OCI-LY7 (cell line): ENCODE measurements at regions of chr6 and their contacts with region 1.

Region 1: GRCh38 chr6:10694302-10695085 is at the starts of genes C6orf52 and PAK1IP1:
- DNase-seq: peak; percentile 97
- H3K4me3 ChIP-seq: peak within 1 kb of the TSS; percentile 92
- H3K27ac ChIP-seq: peak within 1 kb of the TSS; percentile 84
- H3K4me1 ChIP-seq: peaks cover 15% of the 10 kb centered on the region
- CTCF ChIP-seq: no peak
- total RNA-seq, gene C6orf52: 0.66 TPM in 1 of 2 replicates, not detected in the other
- total RNA-seq, gene PAK1IP1: 27.8 and 29.7 TPM in 2 replicates

Region 2: GRCh38 chr6:10510592-10511367 is 183.7 kb before region 1 on chr6:
- CTCF ChIA-PET with region 1: no interaction called
- POLR2A ChIA-PET with region 1: interaction called, 8 read pairs
- intact Hi-C with region 1: loop called (anchors 1 kb)
- DNase-seq: peak; percentile 82
- H3K4me3 ChIP-seq: peak overlapping the region; percentile 11
- H3K27ac ChIP-seq: no peak overlapping the region
- H3K4me1 ChIP-seq: peaks cover 17% of the 10 kb centered on the region
- CTCF ChIP-seq: peak; percentile 96

Region 3: DNA sequence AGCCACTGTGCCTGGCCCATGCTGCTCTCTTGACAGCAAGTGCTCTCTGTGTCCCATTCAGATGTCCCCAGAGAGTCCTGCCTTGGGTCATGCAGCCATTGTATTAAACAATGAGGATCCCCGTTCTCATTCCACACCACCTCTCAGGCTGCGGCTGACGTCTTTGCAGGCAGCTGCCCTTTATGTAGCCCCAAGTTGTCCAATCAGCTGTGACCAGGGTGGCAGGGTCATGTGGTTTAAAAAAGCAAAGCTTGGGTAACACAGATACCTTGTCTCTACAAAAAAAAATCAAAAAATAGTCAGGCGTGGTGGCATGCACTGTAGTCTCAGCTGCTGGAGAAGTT is 160.1 kb before region 1 on chr6:
- CTCF ChIA-PET with region 1: no interaction called
- POLR2A ChIA-PET with region 1: interaction called, 11 read pairs
- intact Hi-C with region 1: loop called (anchors 1 kb)
- DNase-seq: peak; percentile 87
- H3K4me3 ChIP-seq: peak overlapping the region; percentile 89
- H3K27ac ChIP-seq: peak overlapping the region; percentile 95
- H3K4me1 ChIP-seq: peaks cover 71% of the 10 kb centered on the region
- CTCF ChIP-seq: no peak

Region 4: DNA sequence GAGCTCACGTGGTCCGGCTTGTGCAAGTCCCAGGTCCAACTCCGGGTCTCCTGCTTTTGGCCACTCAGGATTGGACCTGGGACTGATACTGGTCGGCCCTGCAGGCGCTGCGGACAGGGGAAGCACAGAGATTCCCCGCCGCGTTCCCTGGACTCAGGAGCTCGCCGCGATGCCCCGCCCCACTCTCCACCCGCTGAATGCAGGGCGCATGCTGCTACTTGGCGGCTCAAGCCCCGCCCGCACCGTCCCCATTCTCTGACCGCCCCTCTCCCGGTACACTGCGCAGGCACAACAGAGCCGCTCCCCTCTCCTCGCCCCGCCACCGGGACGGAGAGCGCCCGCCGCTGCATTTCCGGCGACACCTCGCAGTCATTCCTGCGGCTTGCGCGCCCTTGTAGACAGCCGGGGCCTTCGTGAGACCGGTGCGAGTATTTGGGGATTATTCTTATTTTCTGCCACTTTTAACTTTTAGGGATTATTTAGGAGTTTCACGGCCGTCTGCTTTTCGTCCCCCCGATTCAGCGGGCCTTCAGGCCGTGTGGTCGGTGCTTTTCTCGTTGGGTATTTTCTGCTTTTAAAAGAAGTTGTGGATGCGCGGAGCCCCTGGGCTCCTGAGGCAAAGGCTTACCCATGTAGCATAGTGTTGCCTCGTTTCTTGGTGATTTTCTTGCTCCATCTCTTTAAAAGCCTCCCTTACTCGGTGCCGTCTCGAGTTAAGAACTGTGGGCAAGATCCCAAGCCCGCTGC is 28.5 kb after region 1 on chr6 and contains the start of gene TMEM14C:
- CTCF ChIA-PET with region 1: no interaction called
- POLR2A ChIA-PET with region 1: interaction called, 10 read pairs
- intact Hi-C with region 1: loop called (anchors 1 kb)
- DNase-seq: peak; percentile 87
- H3K4me3 ChIP-seq: peak within 1 kb of the TSS; percentile 72
- H3K27ac ChIP-seq: peak within 1 kb of the TSS; percentile 38
- H3K4me1 ChIP-seq: peaks cover 27% of the 10 kb centered on the region
- CTCF ChIP-seq: no peak
- total RNA-seq, gene TMEM14C: 23.7 and 40.2 TPM in 2 replicates

Region 5: DNA sequence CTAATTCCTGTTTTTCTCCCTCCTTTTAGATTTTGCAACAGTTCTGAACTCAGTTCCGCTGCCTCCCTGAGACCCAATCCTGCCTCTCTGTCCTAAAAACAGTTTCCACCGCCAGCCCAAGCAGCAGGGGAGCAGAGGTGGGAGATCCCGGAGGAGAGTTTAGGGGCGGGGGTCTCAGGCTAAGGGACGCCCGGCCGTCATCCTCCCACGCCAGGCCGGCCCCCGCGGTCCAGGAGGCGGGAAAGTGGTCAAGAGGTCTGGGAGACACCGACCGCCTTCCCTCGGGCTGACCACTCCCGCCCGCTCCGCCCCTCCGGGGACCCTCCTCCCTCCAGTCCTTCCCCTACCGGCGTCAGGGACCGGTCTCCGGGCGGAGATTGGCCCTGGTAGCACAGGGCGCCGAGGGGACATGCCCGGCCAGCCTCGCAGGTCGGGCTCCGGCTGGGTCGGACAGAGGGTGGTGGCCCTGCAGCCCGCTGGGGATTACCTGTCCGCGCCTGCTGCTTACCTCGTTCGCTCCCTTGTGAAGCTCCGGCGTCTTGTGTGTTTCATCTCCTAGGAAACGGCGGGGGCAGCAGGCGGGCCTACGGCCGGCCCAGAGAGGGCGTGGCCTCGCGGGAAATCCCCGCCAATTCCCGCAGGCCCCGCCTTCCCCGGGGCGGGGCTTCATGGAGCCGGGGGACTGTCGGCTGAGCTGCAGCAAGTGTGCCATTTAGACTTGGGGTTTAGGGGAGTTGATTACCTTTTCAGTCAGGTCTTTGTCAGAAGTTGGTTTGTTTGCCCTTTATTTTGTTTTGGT is 143.7 kb after region 1 on chr6 and contains the start of gene MAK:
- CTCF ChIA-PET with region 1: interaction called, 3 read pairs
- POLR2A ChIA-PET with region 1: no interaction called
- intact Hi-C with region 1: loop called (anchors 2 kb)
- DNase-seq: peak; percentile 91
- H3K4me3 ChIP-seq: peak within 1 kb of the TSS; percentile 72
- H3K27ac ChIP-seq: peak within 1 kb of the TSS; percentile 74
- H3K4me1 ChIP-seq: peaks cover 22% of the 10 kb centered on the region
- CTCF ChIP-seq: no peak
- total RNA-seq, gene MAK: not detected in 2 replicates